Activated CD4-positive, alpha-beta memory T cell treated with anti-CD3 and anti-CD28 coated beads for 36 hours (primary cell): ENCODE measurements at regions of chr12 and their contacts with region 1.

Region 1: GRCh38 chr12:96828169-96828789 is 78.8 kb upstream of the NEDD1 start:
- DNase-seq: peak; percentile 31
- H3K4me3 Mint-ChIP-seq: no peak overlapping the region
- H3K27ac Mint-ChIP-seq: no peak overlapping the region
- H3K4me1 Mint-ChIP-seq: no peaks in the 10 kb centered on the region
- H3K27me3 Mint-ChIP-seq: no peaks in the 10 kb centered on the region

Region 2: GRCh38 chr12:96571101-96571862 is 257.0 kb before region 1 on chr12:
- CTCF ChIA-PET with region 1: no interaction called
- POLR2A ChIA-PET with region 1: no interaction called
- intact Hi-C with region 1: loop called (anchors 5 kb)
- DNase-seq: peak; percentile 33
- H3K4me3 Mint-ChIP-seq: peak overlapping the region; percentile 40
- H3K27ac Mint-ChIP-seq: peak overlapping the region; percentile 65
- H3K4me1 Mint-ChIP-seq: peaks cover 26% of the 10 kb centered on the region
- H3K27me3 Mint-ChIP-seq: peaks cover 4% of the 10 kb centered on the region

Region 3: GRCh38 chr12:96719660-96720363 is 108.5 kb before region 1 on chr12:
- CTCF ChIA-PET with region 1: no interaction called
- POLR2A ChIA-PET with region 1: no interaction called
- intact Hi-C with region 1: loop called (anchors 5 kb)
- DNase-seq: peak; percentile 24
- H3K4me3 Mint-ChIP-seq: peak overlapping the region; percentile 81
- H3K27ac Mint-ChIP-seq: peak overlapping the region; percentile 88
- H3K4me1 Mint-ChIP-seq: peaks cover 11% of the 10 kb centered on the region
- H3K27me3 Mint-ChIP-seq: no peaks in the 10 kb centered on the region

Region 4: GRCh38 chr12:96861656-96862055 is 33.4 kb after region 1 on chr12:
- CTCF ChIA-PET with region 1: no interaction called
- POLR2A ChIA-PET with region 1: no interaction called
- intact Hi-C with region 1: loop called (anchors 1 kb)
- DNase-seq: no peak
- H3K4me3 Mint-ChIP-seq: no peak overlapping the region
- H3K27ac Mint-ChIP-seq: no peak overlapping the region
- H3K4me1 Mint-ChIP-seq: no peaks in the 10 kb centered on the region
- H3K27me3 Mint-ChIP-seq: peaks cover 27% of the 10 kb centered on the region

Region 5: GRCh38 chr12:96886998-96887677 is 58.9 kb after region 1 on chr12:
- CTCF ChIA-PET with region 1: no interaction called
- POLR2A ChIA-PET with region 1: no interaction called
- intact Hi-C with region 1: loop called (anchors 5 kb)
- DNase-seq: no peak
- H3K4me3 Mint-ChIP-seq: no peak overlapping the region
- H3K27ac Mint-ChIP-seq: no peak overlapping the region
- H3K4me1 Mint-ChIP-seq: peaks cover 5% of the 10 kb centered on the region
- H3K27me3 Mint-ChIP-seq: peaks cover 10% of the 10 kb centered on the region